Caco-2 (cell line): ENCODE measurements at regions of chr13 and their contacts with region 1.

Region 1: DNA sequence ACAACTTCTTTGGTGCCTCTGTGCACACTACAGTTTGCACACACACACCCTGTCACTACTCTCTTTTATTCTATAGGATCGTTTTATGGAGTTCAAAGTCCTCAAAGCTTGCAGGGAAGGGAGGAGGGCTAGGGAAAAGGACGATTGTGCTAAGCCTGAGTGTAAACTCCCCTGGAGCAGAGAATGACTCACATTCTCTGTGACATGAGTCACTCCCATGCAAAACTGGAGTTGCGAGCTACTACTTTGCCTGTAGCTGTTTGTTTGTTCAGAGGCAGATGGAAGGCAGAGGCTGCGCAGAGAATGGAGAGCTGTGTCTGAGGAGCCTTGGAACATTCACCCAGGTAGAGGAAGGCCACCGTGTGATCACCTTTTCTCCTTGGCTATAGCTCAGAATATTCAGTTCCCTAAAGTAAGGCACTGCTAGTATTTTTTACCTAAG is 80.5 kb upstream of the MBNL2 start:
- DNase-seq: peak; percentile 91 to 95
- H3K4me3 ChIP-seq: peak overlapping the region; percentile 61
- H3K4me3 Mint-ChIP-seq: peak overlapping the region; percentile 83
- H3K27ac Mint-ChIP-seq: peak overlapping the region; percentile 91
- H3K4me1 ChIP-seq: peaks cover 23% of the 10 kb centered on the region
- H3K4me1 Mint-ChIP-seq: peaks cover 37% of the 10 kb centered on the region
- H3K27me3 ChIP-seq: no peaks in the 10 kb centered on the region
- H3K27me3 Mint-ChIP-seq: no peaks in the 10 kb centered on the region
- CTCF ChIP-seq: no peak

Region 2: GRCh38 chr13:97124916-97125809 is 16.4 kb before region 1 on chr13:
- CTCF ChIA-PET with region 1: interaction called, 3 read pairs
- POLR2A ChIA-PET with region 1: interaction called, 4 read pairs
- intact Hi-C with region 1: loop called (anchors 1 kb)
- DNase-seq: peak; percentile 44 to 46
- H3K4me3 ChIP-seq: no peak overlapping the region
- H3K4me3 Mint-ChIP-seq: no peak overlapping the region
- H3K27ac Mint-ChIP-seq: no peak overlapping the region
- H3K4me1 ChIP-seq: peaks cover 62% of the 10 kb centered on the region
- H3K4me1 Mint-ChIP-seq: peaks cover 59% of the 10 kb centered on the region
- H3K27me3 ChIP-seq: no peaks in the 10 kb centered on the region
- H3K27me3 Mint-ChIP-seq: no peaks in the 10 kb centered on the region
- CTCF ChIP-seq: peak in 1 of 2 experiments; percentile 14

Region 3: GRCh38 chr13:97179506-97179905 is 37.9 kb after region 1 on chr13:
- CTCF ChIA-PET with region 1: no interaction called
- POLR2A ChIA-PET with region 1: no interaction called
- intact Hi-C with region 1: loop called (anchors 1 kb)
- DNase-seq: peak; percentile 81 to 90
- H3K4me3 ChIP-seq: no peak overlapping the region
- H3K4me3 Mint-ChIP-seq: peak overlapping the region; percentile 40
- H3K27ac Mint-ChIP-seq: peak overlapping the region; percentile 70
- H3K4me1 ChIP-seq: peaks cover 30% of the 10 kb centered on the region
- H3K4me1 Mint-ChIP-seq: peaks cover 31% of the 10 kb centered on the region
- H3K27me3 ChIP-seq: no peaks in the 10 kb centered on the region
- H3K27me3 Mint-ChIP-seq: no peaks in the 10 kb centered on the region
- CTCF ChIP-seq: no peak

Region 4: GRCh38 chr13:97221989-97222700 is 80.6 kb after region 1 on chr13 and contains the start of gene MBNL2:
- CTCF ChIA-PET with region 1: no interaction called
- POLR2A ChIA-PET with region 1: interaction called, 7 read pairs
- intact Hi-C with region 1: loop called (anchors 1 kb)
- DNase-seq: peak; percentile 91 to 92
- H3K4me3 ChIP-seq: peak within 1 kb of the TSS; percentile 51
- H3K4me3 Mint-ChIP-seq: peak within 1 kb of the TSS; percentile 95
- H3K27ac Mint-ChIP-seq: peak within 1 kb of the TSS; percentile 89
- H3K4me1 ChIP-seq: peaks cover 43% of the 10 kb centered on the region
- H3K4me1 Mint-ChIP-seq: peaks cover 40% of the 10 kb centered on the region
- H3K27me3 ChIP-seq: no peaks in the 10 kb centered on the region
- H3K27me3 Mint-ChIP-seq: no peaks in the 10 kb centered on the region
- CTCF ChIP-seq: no peak
- total RNA-seq, gene MBNL2: 41.6 TPM in 2 replicates

Region 5: GRCh38 chr13:97432917-97433726 is 291.5 kb after region 1 on chr13:
- CTCF ChIA-PET with region 1: no interaction called
- POLR2A ChIA-PET with region 1: interaction called, 6 read pairs
- intact Hi-C with region 1: loop called (anchors 1 kb)
- DNase-seq: peak; percentile 100
- H3K4me3 ChIP-seq: peak overlapping the region; percentile 59
- H3K4me3 Mint-ChIP-seq: peak overlapping the region; percentile 94
- H3K27ac Mint-ChIP-seq: peak overlapping the region; percentile 98
- H3K4me1 ChIP-seq: peaks cover 7% of the 10 kb centered on the region; the same call in 1 of the 2 replicates
- H3K4me1 Mint-ChIP-seq: no peaks in the 10 kb centered on the region
- H3K27me3 ChIP-seq: no peaks in the 10 kb centered on the region
- H3K27me3 Mint-ChIP-seq: peaks cover 6% of the 10 kb centered on the region
- CTCF ChIP-seq: no peak